Gastrocnemius medialis (tissue), 4 donors: ENCODE measurements at regions of chr17 and their contacts with region 1.

Region 1: GRCh38 chr17:27654654-27655524 is 23.9 kb downstream of the LGALS9 start:
- DNase-seq: peak in 1 of 2 donors; percentile 49
- ATAC-seq: no peak
- H3K4me3 ChIP-seq: no peak overlapping the region
- H3K27ac ChIP-seq: no peak overlapping the region
- H3K4me1 ChIP-seq: peaks cover 0 to 2% of the 10 kb centered on the region in 2 donors
- H3K27me3 ChIP-seq: no peaks in the 10 kb centered on the region
- CTCF ChIP-seq: peak; percentile 54 to 92 (median 82)
- POLR2A ChIP-seq: no peak

Region 2: DNA sequence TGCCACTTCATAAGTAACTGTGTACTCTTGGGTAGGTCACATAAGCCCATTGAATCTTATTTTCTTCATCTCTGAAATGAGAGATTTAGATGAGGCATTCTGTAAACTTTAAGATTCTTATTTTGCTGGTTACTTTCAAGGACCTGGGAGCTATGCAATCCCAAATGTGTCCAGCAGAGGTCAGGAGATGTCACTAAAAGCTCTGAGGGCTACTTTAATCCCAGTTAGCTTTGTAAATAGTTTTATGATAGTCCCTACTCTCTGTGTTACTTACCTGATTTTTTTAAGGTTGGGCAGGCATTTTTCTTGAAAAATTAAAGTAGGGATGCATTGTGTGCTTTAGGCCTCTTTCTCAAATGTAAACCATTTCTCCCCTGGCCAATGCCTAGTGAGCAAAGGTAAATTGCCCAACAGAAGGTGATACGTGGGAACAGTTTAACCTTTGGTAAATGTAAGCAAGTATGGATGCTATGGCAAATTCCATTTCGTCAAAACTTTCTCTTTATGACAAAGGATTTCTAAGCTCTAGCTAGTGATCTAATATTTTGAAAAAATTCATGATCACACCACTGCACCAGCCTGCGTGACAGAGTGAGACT is 418.1 kb before region 1 on chr17:
- in situ Hi-C with region 1: no loop called
- intact Hi-C with region 1: loop called (anchors 5 kb)
- DNase-seq: peak; percentile 38 to 70
- ATAC-seq: peak; percentile 87 to 89
- H3K4me3 ChIP-seq: no peak overlapping the region
- H3K27ac ChIP-seq: no peak overlapping the region
- H3K4me1 ChIP-seq: peaks cover 0 to 3% of the 10 kb centered on the region in 2 donors
- H3K27me3 ChIP-seq: no peaks in the 10 kb centered on the region
- CTCF ChIP-seq: peak; percentile 87 to 94 (median 92)
- POLR2A ChIP-seq: no peak

Region 3: GRCh38 chr17:27609611-27610303 is 45.1 kb before region 1 on chr17:
- in situ Hi-C with region 1: loop called (anchors 5 kb)
- intact Hi-C with region 1: no loop called
- DNase-seq: no peak
- ATAC-seq: peak in 1 of 2 donors; percentile 58
- H3K4me3 ChIP-seq: no peak overlapping the region
- H3K27ac ChIP-seq: no peak overlapping the region
- H3K4me1 ChIP-seq: no peaks in the 10 kb centered on the region
- H3K27me3 ChIP-seq: no peaks in the 10 kb centered on the region
- CTCF ChIP-seq: peak in 4 of 5 experiments; percentile 28 to 42 (median 39)
- POLR2A ChIP-seq: no peak

Region 4: DNA sequence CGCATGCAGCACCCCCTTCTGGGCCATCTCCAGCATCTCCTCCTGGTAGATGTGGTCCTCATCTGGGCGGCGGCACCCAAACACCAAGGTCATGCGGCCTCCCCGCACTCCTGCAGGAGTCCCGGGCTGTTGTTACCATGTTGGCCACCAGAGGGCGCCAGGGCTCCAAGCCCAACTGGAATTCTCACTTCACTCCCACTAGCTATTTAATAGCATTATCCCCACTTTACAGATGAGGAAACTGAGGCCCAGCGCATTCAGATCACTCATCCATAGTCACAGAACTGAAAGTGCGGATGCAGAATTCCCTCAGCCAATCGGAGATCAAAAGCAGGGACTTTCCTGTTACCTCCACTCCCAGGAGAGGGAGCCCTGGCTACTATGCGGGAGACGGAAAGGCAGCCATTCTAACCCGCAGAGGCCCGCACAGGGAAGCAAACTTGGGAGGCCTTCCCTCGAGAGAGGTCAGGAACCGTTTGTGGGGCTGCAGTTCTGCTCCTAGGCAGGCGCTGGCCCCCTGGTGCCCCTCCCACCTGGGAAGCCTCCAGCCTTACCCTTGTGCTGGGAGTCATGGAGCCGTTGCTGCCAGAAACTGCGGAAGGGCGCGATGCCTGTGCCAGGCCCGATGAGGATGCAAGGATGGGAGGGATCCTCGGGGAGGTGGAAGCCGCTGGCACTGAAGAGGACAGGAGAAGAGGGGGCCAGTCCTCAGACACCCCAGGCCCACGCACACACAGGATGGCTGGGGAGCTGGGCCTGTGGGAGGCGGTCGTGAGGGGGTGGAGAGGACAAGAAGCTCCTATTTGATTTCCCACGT is 105.4 kb after region 1 on chr17:
- in situ Hi-C with region 1: loop called in 1 of 4 experiments (anchors 25 kb)
- intact Hi-C with region 1: loop called (anchors 1 kb)
- DNase-seq: peak in 1 of 2 donors; percentile 40
- ATAC-seq: no peak
- H3K4me3 ChIP-seq: no peak overlapping the region
- H3K27ac ChIP-seq: no peak overlapping the region
- H3K4me1 ChIP-seq: no peaks in the 10 kb centered on the region
- H3K27me3 ChIP-seq: no peaks in the 10 kb centered on the region
- CTCF ChIP-seq: peak; percentile 41 to 89 (median 75)
- POLR2A ChIP-seq: no peak

Region 5: GRCh38 chr17:27892866-27893769 is 238.2 kb after region 1 on chr17 and contains the start of gene LYRM9:
- in situ Hi-C with region 1: loop called in 1 of 4 experiments (anchors 25 kb)
- intact Hi-C with region 1: loop called (anchors 5 kb)
- DNase-seq: peak; percentile 75 to 88
- ATAC-seq: peak; percentile 96 to 97
- H3K4me3 ChIP-seq: peak within 1 kb of the TSS; percentile 66 to 91 (median 85)
- H3K27ac ChIP-seq: peak within 1 kb of the TSS; percentile 84 to 88 (median 86)
- H3K4me1 ChIP-seq: peaks cover 6 to 7% of the 10 kb centered on the region in 2 donors
- H3K27me3 ChIP-seq: no peaks in the 10 kb centered on the region
- CTCF ChIP-seq: peak; percentile 81 to 98 (median 90)
- POLR2A ChIP-seq: peak; percentile 21 to 30
- total RNA-seq, gene LYRM9: 5.9 to 37.2 (median 9.6) TPM